ENCODE measurements at regions of chr6 and their contacts with region 1.

Region 1: GRCh38 chr6:155154158-155154830 is 109.5 kb upstream of the CLDN20 start:
- DNase-seq: no peak
- H3K4me3 ChIP-seq: peak overlapping the region in 1 of 3 donors; percentile 5
- H3K27ac ChIP-seq: peak overlapping the region in 1 of 2 donors; percentile 69
- H3K4me1 ChIP-seq: no peaks in the 10 kb centered on the region
- H3K27me3 ChIP-seq: no peaks in the 10 kb centered on the region
- CTCF ChIP-seq: no peak
- POLR2A ChIP-seq: no peak

Region 2: DNA sequence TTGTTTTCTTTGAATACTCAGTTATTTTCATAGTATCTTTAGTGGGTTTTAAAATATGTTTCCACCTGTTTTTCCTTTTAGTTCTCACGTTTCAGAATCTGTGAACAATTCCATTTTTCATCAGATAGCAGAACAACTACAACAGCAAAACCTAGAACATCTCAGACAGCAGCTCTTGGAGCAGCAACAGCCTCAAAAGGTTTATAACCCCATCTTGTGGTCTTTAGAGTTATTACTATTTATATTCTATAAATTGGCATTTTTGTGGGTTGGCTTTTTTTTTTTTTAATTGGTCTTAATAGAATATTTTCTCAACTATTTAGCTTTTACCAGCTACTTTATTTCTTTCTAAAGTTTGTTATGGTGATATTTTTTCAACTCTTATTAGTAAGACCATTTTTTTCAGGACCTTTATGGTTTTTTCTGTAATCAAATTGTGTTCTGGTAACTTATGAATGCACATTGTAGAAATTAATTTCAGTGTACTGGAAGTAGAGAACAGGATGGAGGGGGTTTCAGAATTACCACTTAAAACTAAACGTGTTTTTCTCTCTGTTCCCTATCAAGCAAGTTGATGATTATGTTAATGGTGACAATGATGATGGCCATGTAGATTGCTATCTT is 348.9 kb before region 1 on chr6:
- intact Hi-C with region 1: no loop called
- DNase-seq: no peak
- H3K4me3 ChIP-seq: no peak overlapping the region
- H3K27ac ChIP-seq: no peak overlapping the region
- H3K4me1 ChIP-seq: no peaks in the 10 kb centered on the region
- H3K27me3 ChIP-seq: no peaks in the 10 kb centered on the region
- CTCF ChIP-seq: peak in 2 of 3 donors; percentile 35 to 37
- POLR2A ChIP-seq: no peak

Region 3: DNA sequence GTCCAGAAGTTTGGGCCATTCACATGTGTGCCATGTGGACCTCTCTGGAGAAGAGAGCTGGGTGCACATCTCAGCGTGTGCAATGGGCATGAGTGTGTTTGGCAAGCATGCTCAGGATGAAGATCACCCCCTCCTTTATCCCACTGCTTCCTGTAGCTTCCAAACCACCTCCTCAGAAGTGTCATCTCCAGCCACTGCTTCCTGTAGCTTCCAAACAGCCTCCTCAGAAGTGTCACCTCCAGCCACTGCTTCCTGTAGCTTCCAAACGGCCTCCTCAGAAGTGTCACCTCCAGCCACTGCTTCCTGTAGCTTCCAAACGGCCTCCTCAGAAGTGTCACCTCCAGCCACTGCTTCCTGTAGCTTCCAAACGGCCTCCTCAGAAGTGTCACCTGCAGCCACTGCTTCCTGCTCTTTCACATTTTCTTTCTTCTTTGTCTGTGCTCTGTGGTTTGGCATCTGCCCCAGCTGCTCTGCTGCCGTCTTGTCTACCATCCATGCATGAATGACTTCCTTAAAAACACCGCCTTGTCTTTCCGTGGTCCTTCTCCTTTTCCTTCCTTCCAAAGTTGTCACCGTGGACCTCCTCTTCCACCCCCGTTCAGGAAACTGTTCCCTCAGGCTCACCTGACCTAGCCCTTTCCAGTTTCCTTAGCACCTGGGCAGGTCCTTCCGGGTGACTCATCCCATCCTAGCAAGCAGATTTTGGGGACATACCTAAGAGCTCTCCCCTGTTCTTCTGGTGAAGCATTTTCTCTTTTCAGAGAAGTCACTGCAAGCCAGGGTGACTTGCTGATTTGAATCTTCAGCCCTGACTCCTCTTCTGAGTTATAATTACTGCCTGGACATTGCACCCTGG is 202.7 kb before region 1 on chr6:
- intact Hi-C with region 1: loop called (anchors 10 kb)
- DNase-seq: no peak
- H3K4me3 ChIP-seq: no peak overlapping the region
- H3K27ac ChIP-seq: no peak overlapping the region
- H3K4me1 ChIP-seq: no peaks in the 10 kb centered on the region
- H3K27me3 ChIP-seq: no peaks in the 10 kb centered on the region
- CTCF ChIP-seq: no peak
- POLR2A ChIP-seq: no peak

Region 4: DNA sequence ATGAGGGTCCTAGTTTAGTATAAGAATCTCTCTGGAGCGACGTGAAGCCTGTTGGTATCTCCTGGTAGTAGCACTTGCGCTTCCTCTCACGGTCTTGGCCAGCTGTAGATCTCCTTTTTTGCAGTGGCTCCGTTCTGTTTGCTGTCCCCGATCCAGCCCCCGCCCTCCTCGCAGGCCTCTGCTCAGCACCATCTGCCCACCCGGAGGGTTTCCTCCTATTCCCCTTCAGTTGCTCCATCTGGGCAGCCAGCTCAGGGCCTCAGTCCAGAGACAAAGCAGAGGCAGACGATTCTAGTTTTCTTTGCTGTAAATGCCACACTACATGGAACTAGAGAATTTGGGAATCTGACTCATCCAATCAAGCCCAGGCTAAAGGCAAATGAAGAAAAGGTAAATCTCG is 32.6 kb before region 1 on chr6:
- intact Hi-C with region 1: loop called (anchors 2 kb)
- DNase-seq: no peak
- H3K4me3 ChIP-seq: no peak overlapping the region
- H3K27ac ChIP-seq: no peak overlapping the region
- H3K4me1 ChIP-seq: no peaks in the 10 kb centered on the region
- H3K27me3 ChIP-seq: no peaks in the 10 kb centered on the region
- CTCF ChIP-seq: no peak
- POLR2A ChIP-seq: no peak

Region 5: DNA sequence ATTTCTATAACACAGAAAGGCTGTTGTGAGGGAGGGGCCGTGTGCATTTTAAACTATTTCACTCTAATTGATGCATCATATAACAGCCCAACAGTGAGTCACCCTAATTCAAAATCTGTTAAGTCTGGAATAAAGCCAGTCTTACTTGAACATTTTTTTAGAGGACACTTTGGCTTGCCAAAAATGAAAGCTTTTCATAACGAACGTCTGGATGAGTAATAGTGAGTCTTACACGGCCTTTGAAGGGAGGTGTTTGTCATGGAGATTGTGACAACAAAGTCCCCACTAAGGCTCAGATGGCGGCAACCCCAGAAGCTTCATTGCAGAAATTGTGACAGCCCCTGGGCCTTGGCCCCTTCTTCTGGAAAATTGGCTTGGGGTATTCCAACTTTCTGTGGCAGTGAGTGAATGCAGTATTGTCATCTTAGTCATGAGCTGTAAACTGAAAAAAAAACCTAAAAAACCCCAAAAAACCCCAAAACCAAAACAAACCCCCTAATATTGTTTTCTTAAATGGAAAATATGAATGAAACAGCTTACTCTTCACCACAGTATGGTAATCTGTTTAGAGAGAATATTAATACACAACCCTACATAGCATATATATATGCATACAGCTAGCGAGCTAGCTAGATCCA is 16.9 kb after region 1 on chr6:
- intact Hi-C with region 1: no loop called
- DNase-seq: peak in 1 of 2 donors; percentile 36
- H3K4me3 ChIP-seq: no peak overlapping the region
- H3K27ac ChIP-seq: peak overlapping the region; percentile 10 to 46
- H3K4me1 ChIP-seq: peaks cover 0 to 4% of the 10 kb centered on the region in 2 donors
- H3K27me3 ChIP-seq: no peaks in the 10 kb centered on the region
- CTCF ChIP-seq: no peak
- POLR2A ChIP-seq: no peak